GM18951 (cell line): ENCODE measurements at regions of chr9 and their contacts with region 1.

Region 1: GRCh38 chr9:5593904-5594303 is 35.0 kb upstream of the RIC1 start:
- POLR2A ChIP-seq: no peak

Region 2: GRCh38 chr9:4750023-4750673 is 843.8 kb before region 1 on chr9:
- in situ Hi-C with region 1: loop called (anchors 10 kb)
- POLR2A ChIP-seq: no peak

Region 3: DNA sequence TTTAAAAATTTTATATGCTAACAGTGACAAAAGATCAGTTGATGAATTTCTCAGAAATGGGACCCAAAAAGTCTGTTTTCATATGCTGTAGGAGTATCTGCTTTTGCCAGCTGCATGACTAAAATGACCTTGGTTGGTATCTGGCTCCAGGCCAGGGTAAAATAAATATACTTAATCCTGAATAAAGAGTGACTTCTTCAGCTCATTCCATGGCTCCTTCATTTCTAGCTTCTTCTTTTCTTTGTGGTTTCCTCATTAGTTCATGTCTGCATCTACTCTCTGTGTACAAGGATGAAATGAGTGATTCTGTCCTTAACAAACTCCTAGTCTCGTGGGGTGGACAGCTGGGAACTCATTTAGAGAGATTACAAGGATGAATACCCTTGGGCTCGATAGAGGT is 765.1 kb before region 1 on chr9:
- in situ Hi-C with region 1: no loop called
- POLR2A ChIP-seq: no peak

Region 4: GRCh38 chr9:5186416-5187169 is 407.3 kb before region 1 on chr9:
- in situ Hi-C with region 1: loop called (anchors 10 kb)
- POLR2A ChIP-seq: no peak